ENCODE measurements at regions of chr12 and their contacts with region 1.

Region 1: DNA sequence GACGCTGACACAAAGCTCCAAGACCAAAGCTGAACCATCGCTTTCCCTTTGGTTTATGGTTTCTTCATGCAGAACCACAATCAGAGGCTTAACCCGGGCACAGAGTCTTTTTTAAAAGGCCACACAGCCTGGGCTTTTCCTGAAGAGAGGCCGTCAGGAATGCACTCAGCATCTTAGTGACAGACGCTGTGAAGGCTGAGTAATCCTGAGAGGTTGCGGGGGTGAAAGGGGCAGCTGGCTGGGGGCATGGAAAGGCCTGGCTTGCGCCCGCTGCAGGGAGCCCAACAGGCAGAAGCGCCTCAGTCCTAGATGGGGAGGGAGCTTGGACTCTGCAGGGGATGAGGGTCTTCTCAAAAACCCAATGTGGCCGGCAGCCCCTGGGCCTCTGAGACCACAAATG is 13.6 kb downstream of the CTDSP2 start:
- DNase-seq: no peak
- H3K4me3 ChIP-seq: peak overlapping the region in 1 of 3 donors; percentile 27
- H3K27ac ChIP-seq: peak overlapping the region in 1 of 2 donors; percentile 24
- H3K4me1 ChIP-seq: peaks cover 8 to 69% (median 51%) of the 10 kb centered on the region in 3 donors
- H3K27me3 ChIP-seq: no peaks in the 10 kb centered on the region
- CTCF ChIP-seq: no peak

Region 2: GRCh38 chr12:57765042-57765697 is 67.8 kb before region 1 on chr12:
- intact Hi-C with region 1: no loop called
- DNase-seq: peak in 4 of 5 donors; percentile 40 to 80 (median 54)
- H3K4me3 ChIP-seq: peak overlapping the region in 2 of 3 donors; percentile 55 to 59
- H3K27ac ChIP-seq: peak overlapping the region; percentile 27 to 57
- H3K4me1 ChIP-seq: peaks cover 0 to 27% (median 17%) of the 10 kb centered on the region in 3 donors
- H3K27me3 ChIP-seq: peaks cover 30% of the 10 kb centered on the region
- CTCF ChIP-seq: peak; percentile 16

Region 3: GRCh38 chr12:57899010-57899662 is 66.2 kb after region 1 on chr12:
- intact Hi-C with region 1: loop called (anchors 5 kb)
- DNase-seq: peak in 1 of 5 donors; percentile 82
- H3K4me3 ChIP-seq: no peak overlapping the region
- H3K27ac ChIP-seq: peak overlapping the region in 1 of 2 donors; percentile 98
- H3K4me1 ChIP-seq: peaks cover 8 to 41% (median 27%) of the 10 kb centered on the region in 3 donors
- H3K27me3 ChIP-seq: no peaks in the 10 kb centered on the region
- CTCF ChIP-seq: no peak